Activated naive CD4-positive, alpha-beta T cell treated with anti-CD3 and anti-CD28 coated beads for 36 hours (primary cell): ENCODE measurements at regions of chr12 and their contacts with region 1.

Region 1: DNA sequence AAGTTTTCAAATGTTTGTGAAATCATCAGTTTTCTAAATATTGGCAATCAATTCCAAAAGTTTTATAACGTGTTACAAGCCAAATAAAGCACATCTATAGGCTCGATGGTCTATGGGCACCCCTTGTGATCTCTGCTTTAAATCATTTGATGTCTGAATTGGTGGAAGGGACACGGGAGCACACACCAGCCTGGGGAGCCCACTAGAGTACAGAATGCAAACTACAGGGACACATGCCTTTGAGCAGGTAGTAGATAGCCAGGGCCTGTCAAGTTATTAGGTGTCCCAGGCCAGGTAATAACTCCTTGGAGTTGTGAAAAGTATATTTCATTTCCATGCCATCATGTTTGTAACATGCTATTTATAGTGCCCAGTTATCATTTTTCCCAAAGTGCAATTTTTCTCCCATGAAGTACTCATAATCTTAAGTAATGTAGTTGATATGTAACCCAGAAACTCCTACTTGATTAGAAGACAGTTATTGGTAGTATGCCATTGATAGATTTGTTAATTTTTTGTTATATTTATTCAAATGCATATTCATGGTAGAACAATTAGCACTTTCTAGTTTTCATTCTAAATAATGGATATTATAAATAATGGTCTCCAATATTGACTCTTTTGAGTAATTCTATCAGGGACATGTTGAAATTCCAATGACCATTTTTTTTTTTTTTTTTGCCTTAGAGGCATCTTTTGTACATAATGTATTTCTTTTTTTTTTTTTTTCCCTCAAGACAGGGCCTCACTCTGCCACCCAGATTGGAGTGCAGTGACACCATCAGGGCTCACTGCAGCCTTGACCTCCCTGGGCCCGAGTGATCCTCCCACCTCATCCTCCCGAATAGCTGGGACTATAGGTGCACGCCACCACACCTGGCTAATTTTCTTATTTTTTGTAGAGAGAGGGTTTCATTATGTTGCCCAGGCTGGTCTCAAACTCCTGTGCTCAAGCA is 96.9 kb upstream of the FGD4 start:
- DNase-seq: no peak
- H3K4me3 Mint-ChIP-seq: no peak overlapping the region
- H3K27ac Mint-ChIP-seq: no peak overlapping the region
- H3K4me1 Mint-ChIP-seq: no peaks in the 10 kb centered on the region
- H3K27me3 Mint-ChIP-seq: no peaks in the 10 kb centered on the region

Region 2: GRCh38 chr12:31682136-31682962 is 620.1 kb before region 1 on chr12:
- CTCF ChIA-PET with region 1: no interaction called
- intact Hi-C with region 1: loop called (anchors 1 kb)
- DNase-seq: peak; percentile 83
- H3K4me3 Mint-ChIP-seq: no peak overlapping the region
- H3K27ac Mint-ChIP-seq: peak overlapping the region; percentile 84
- H3K4me1 Mint-ChIP-seq: peaks cover 5% of the 10 kb centered on the region
- H3K27me3 Mint-ChIP-seq: no peaks in the 10 kb centered on the region

Region 3: GRCh38 chr12:31797230-31797872 is 505.1 kb before region 1 on chr12:
- CTCF ChIA-PET with region 1: no interaction called
- intact Hi-C with region 1: loop called (anchors 10 kb)
- DNase-seq: peak; percentile 55
- H3K4me3 Mint-ChIP-seq: peak overlapping the region; percentile 16
- H3K27ac Mint-ChIP-seq: peak overlapping the region; percentile 85
- H3K4me1 Mint-ChIP-seq: peaks cover 25% of the 10 kb centered on the region
- H3K27me3 Mint-ChIP-seq: no peaks in the 10 kb centered on the region

Region 4: DNA sequence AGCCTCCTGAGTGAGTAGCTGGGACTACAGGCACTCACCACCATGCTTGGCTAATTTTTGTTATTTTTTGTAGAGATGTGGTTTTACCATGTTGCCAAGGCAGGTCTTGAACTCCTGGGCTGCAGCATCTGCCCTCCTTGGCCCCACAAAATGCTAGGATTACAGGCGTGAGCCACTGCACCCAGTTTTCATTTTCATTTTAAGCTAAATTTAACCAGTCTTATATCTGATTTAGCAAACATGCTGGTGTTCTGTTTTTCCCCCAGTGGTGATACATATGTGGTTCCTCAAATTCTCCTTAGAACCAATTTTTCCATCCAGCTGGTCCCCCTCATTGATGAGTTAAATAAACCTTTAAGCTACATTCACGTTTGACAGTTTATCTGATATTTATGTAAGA is 239.6 kb before region 1 on chr12:
- CTCF ChIA-PET with region 1: interaction called, 5 read pairs
- intact Hi-C with region 1: loop called (anchors 1 kb)
- DNase-seq: no peak
- H3K4me3 Mint-ChIP-seq: no peak overlapping the region
- H3K27ac Mint-ChIP-seq: no peak overlapping the region
- H3K4me1 Mint-ChIP-seq: peaks cover 11% of the 10 kb centered on the region
- H3K27me3 Mint-ChIP-seq: no peaks in the 10 kb centered on the region